Naive thymus-derived CD4-positive, alpha-beta T cell (primary cell): ENCODE measurements at regions of chr2 and their contacts with region 1.

Region 1: DNA sequence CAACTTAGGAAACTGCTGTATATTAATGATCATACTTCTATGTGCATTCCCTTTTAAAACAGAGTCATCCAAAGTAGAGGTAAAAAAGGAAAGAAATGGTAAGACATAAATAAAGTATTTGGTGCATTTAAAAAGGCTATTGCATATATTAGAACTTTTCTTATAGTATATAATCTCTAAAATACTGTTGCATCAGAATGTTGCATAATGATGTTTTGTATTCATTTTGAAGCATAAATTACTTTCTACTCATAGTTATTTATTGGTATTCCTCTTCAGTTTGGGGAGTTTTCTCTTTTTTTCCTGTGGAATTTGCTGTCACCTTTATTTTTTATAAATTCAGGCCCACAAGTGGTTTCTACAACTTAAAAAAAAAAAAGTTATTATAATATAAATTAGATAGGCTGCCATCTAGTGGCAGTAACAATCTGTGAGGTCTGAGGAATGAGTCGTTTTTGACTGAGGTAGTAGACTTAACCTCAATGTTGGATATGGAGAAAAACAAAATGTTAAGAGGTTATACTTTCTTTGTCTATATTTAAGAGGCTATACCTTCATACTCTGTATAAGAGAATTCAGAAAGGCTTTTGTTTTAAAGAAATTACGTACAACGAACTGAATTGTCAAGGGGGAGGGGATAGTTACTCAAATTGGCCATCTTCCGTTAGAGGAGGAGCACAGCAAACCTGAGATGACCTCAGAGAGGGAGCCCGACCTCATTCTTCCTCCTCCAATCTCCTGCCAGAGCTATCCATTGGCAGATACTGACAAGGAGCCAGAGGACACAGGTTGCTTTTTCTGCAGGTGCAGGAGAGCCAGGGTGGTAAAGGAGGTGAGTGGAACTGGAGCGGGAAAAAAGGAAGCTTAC is 23.8 kb downstream of the ANKAR start:
- DNase-seq: peak in 7 of 9 donors; percentile 25 to 55 (median 51)
- ATAC-seq: peak; percentile 84
- H3K4me3 ChIP-seq: no peak overlapping the region
- H3K4me3 Mint-ChIP-seq: peak overlapping the region in 6 of 10 donors; percentile 2 to 44 (median 21)
- H3K27ac ChIP-seq: no peak overlapping the region
- H3K27ac Mint-ChIP-seq: peak overlapping the region in 4 of 9 donors; percentile 15 to 72 (median 49)
- H3K4me1 ChIP-seq: no peaks in the 10 kb centered on the region
- H3K4me1 Mint-ChIP-seq: peaks cover 0 to 8% (median 4%) of the 10 kb centered on the region in 7 donors
- H3K27me3 ChIP-seq: no peaks in the 10 kb centered on the region
- H3K27me3 Mint-ChIP-seq: no peaks in the 10 kb centered on the region

Region 2: DNA sequence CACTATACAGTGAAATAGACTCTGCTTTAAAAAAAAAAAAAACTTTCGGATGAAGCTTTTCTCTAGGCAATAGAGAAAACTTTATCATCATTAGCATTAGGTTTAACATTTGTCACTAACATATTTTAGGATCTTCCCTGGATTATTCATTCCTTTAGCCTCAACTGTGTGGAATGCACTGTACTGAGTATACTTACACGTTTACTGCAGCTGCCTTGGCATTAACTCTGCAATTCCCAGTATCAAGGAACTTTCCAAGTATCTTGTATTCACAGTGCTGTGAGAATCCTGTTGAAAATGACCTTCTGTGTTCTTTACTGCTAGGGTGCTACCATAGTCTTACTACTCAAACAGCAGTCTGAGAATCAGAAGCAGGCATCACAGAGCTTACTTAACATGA is 1052.3 kb before region 1 on chr2:
- CTCF ChIA-PET with region 1: no interaction called
- POLR2A ChIA-PET with region 1: no interaction called
- intact Hi-C with region 1: no loop called
- DNase-seq: no peak
- ATAC-seq: no peak
- H3K4me3 ChIP-seq: no peak overlapping the region
- H3K4me3 Mint-ChIP-seq: no peak overlapping the region
- H3K27ac ChIP-seq: no peak overlapping the region
- H3K27ac Mint-ChIP-seq: no peak overlapping the region
- H3K4me1 ChIP-seq: no peaks in the 10 kb centered on the region
- H3K4me1 Mint-ChIP-seq: no peaks in the 10 kb centered on the region
- H3K27me3 ChIP-seq: no peaks in the 10 kb centered on the region
- H3K27me3 Mint-ChIP-seq: no peaks in the 10 kb centered on the region

Region 3: DNA sequence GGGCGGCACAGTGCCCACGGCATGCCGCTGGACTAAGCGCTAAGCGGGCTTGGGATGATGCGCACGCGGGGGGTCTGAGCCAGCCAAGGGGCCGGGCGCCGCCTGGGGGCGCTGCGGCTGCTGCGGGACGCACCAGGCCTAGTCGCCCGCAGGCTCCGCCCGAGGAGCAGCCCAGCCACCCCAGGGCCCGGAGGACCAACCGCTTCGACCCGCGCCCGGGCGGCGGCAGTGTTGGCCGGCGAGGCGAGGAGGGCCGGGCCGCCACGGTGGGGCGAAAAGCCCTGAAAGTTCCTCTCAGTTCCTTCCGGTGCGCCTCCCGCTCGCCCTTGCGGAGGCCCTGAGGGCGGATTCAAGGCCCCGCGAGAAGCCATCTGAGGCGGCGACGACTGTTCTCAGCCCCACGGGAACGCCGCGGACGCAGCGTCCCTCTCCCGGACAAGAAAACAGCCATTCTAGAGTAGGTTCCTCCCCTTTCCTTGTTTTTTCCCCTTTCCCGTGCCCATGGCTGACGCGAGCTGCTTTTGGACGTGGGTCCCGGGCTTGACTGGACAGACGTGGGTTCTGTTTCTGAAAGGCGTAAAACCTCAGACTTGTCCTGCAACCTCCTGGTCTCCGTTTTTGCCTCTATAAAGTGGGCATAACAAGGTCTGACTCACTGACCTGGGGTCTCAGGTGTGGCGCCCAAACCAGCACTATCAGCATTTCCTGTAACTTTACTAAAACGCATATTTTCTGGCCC is 23.7 kb before region 1 on chr2 and contains the start of gene ANKAR:
- CTCF ChIA-PET with region 1: interaction called, 7 read pairs
- POLR2A ChIA-PET with region 1: interaction called, 8 read pairs
- intact Hi-C with region 1: loop called (anchors 1 kb)
- DNase-seq: peak; percentile 71 to 88 (median 84)
- ATAC-seq: peak; percentile 98
- H3K4me3 ChIP-seq: peak within 1 kb of the TSS; percentile 62
- H3K4me3 Mint-ChIP-seq: peak within 1 kb of the TSS; percentile 88 to 96 (median 95)
- H3K27ac ChIP-seq: peak within 1 kb of the TSS; percentile 86
- H3K27ac Mint-ChIP-seq: peak within 1 kb of the TSS; percentile 96 to 99 (median 97)
- H3K4me1 ChIP-seq: peaks cover 9 to 12% of the 10 kb centered on the region in 2 donors
- H3K4me1 Mint-ChIP-seq: peaks cover 17 to 49% (median 40%) of the 10 kb centered on the region in 7 donors
- H3K27me3 ChIP-seq: no peaks in the 10 kb centered on the region
- H3K27me3 Mint-ChIP-seq: no peaks in the 10 kb centered on the region
- total RNA-seq, gene ANKAR: 4.3 to 17.9 (median 10.3) TPM

Region 4: GRCh38 chr2:189751080-189751658 is 52.9 kb after region 1 on chr2:
- CTCF ChIA-PET with region 1: no interaction called
- POLR2A ChIA-PET with region 1: no interaction called
- intact Hi-C with region 1: loop called in 1 of 2 experiments (anchors 5 kb)
- DNase-seq: peak in 7 of 9 donors; percentile 26 to 63 (median 49)
- ATAC-seq: peak; percentile 87
- H3K4me3 ChIP-seq: no peak overlapping the region
- H3K4me3 Mint-ChIP-seq: no peak overlapping the region
- H3K27ac ChIP-seq: no peak overlapping the region
- H3K27ac Mint-ChIP-seq: peak overlapping the region in 1 of 9 donors; percentile 1
- H3K4me1 ChIP-seq: no peaks in the 10 kb centered on the region
- H3K4me1 Mint-ChIP-seq: peaks cover 0 to 4% (median 0%) of the 10 kb centered on the region in 7 donors
- H3K27me3 ChIP-seq: no peaks in the 10 kb centered on the region
- H3K27me3 Mint-ChIP-seq: no peaks in the 10 kb centered on the region

Region 5: DNA sequence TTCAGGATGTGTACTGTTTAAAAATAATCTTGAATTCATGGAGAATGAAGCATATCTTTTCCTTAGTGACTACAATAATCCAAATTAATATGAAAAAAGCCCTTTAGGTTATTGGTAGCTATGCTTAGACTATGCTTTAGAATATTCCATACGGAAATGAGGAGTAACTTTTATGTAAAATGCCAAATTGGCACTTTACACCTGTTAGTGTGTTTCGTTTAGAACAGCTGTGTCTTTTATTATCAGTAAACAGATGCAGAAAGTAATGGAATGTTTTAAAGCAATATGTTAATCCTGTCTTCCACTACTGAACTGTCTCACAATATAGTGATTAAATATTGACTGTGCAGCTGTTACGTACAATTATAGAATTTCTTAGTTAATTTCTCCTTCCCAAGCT is 215.6 kb after region 1 on chr2:
- CTCF ChIA-PET with region 1: no interaction called
- POLR2A ChIA-PET with region 1: no interaction called
- intact Hi-C with region 1: no loop called
- DNase-seq: no peak
- ATAC-seq: no peak
- H3K4me3 ChIP-seq: no peak overlapping the region
- H3K4me3 Mint-ChIP-seq: no peak overlapping the region
- H3K27ac ChIP-seq: no peak overlapping the region
- H3K27ac Mint-ChIP-seq: no peak overlapping the region
- H3K4me1 ChIP-seq: no peaks in the 10 kb centered on the region
- H3K4me1 Mint-ChIP-seq: no peaks in the 10 kb centered on the region
- H3K27me3 ChIP-seq: no peaks in the 10 kb centered on the region
- H3K27me3 Mint-ChIP-seq: peaks cover 12 to 23% (median 20%) of the 10 kb centered on the region in 5 donors